H1 (cell line): ENCODE measurements at regions of chr4 and their contacts with region 1.

Region 1: DNA sequence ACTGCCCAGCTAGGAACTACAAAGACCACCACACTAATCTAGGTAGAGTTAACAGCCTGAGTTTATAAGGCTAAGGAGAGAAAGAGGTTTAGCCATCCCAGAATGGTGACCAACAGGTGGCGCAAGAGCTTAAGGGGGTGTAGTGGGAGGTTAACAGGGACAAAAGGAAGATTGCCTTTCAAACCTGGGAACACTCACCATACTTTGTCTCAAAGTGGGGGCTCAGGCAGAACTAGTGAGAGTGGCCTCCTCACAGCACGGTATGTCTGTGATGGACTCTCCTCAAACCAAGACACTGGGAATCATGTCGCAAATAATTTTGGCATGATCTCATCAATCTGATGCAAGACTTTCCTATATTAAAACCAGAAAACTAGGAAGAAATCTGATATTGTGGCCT is 23.4 kb downstream of the CCNI start:
- DNase-seq: peak in 1 of 2 experiments; percentile 89
- H3K4me3 ChIP-seq: no peak overlapping the region
- H3K27ac ChIP-seq: 0 out of 2 replicates have a peak overlapping the region, but pooled peaks have one; percentile 37
- H3K4me1 ChIP-seq: no peaks in the 10 kb centered on the region; a peak in 1 of 7 replicates
- H3K27me3 ChIP-seq: no peaks in the 10 kb centered on the region
- CTCF ChIP-seq: peak; percentile 61 to 92 (median 81)
- EP300 ChIP-seq: no peak
- POLR2A ChIP-seq: no peak
- RAD21 ChIP-seq: peak; percentile 76 to 82

Region 2: DNA sequence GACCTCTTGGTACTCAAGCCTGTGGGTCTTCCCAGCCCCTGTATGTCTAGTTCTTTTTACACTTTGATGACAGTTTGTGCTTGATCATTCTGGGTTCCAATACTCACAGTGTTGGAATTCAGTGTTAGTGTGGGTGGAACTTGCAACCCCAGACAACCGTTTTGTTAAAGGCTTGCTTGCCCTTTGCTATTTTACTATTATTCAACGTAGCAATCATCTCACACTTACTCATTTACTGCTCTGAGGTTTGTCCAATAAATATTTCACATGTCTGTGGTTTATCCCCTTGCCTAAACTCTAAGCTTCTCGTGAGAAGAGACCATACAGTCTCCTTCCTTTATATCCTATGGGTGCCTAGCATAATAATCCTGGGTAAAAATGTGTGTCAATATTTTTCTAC is 120.0 kb after region 1 on chr4:
- CTCF ChIA-PET with region 1: interaction called, 17 read pairs
- POLR2A ChIA-PET with region 1: interaction called, 3 read pairs
- DNase-seq: no peak
- H3K4me3 ChIP-seq: no peak overlapping the region
- H3K27ac ChIP-seq: no peak overlapping the region
- H3K4me1 ChIP-seq: peaks cover 0 to 3% (median under 1%) of the 10 kb centered on the region in 4 experiments; a peak in 4 of 7 replicates
- H3K27me3 ChIP-seq: peaks cover 12 to 25% (median 20%) of the 10 kb centered on the region in 4 experiments
- CTCF ChIP-seq: no peak
- EP300 ChIP-seq: no peak
- POLR2A ChIP-seq: no peak
- RAD21 ChIP-seq: no peak